ENCODE measurements at regions of chr7 and their contacts with region 1.

Region 1: GRCh38 chr7:155247479-155248365 is 50.0 kb upstream of the INSIG1 start:
- DNase-seq: no peak
- H3K4me3 ChIP-seq: no peak overlapping the region
- CTCF ChIP-seq: no peak

Region 2: GRCh38 chr7:155283565-155284194 is 36.0 kb after region 1 on chr7:
- in situ Hi-C with region 1: loop called (anchors 5 kb)
- DNase-seq: no peak
- H3K4me3 ChIP-seq: no peak overlapping the region
- CTCF ChIP-seq: no peak